Mucosa of descending colon (tissue), 3 donors: ENCODE measurements at regions of chr1 and their contacts with region 1.

Region 1: GRCh38 chr1:150925816-150926741 is at the start of gene SETDB1:
- DNase-seq: peak; percentile 96 to 97 (median 96)
- ATAC-seq: peak; percentile 99
- H3K4me3 ChIP-seq: peak within 1 kb of the TSS; percentile 48
- H3K4me1 ChIP-seq: peaks cover 10% of the 10 kb centered on the region
- CTCF ChIP-seq: no peak
- total RNA-seq, gene SETDB1: 35.4 to 49.4 (median 42.8) TPM

Region 2: GRCh38 chr1:150789396-150789795 is 136.7 kb before region 1 on chr1:
- intact Hi-C with region 1: no loop called
- DNase-seq: no peak
- ATAC-seq: no peak
- H3K4me3 ChIP-seq: no peak overlapping the region
- H3K4me1 ChIP-seq: no peaks in the 10 kb centered on the region
- CTCF ChIP-seq: no peak

Region 3: DNA sequence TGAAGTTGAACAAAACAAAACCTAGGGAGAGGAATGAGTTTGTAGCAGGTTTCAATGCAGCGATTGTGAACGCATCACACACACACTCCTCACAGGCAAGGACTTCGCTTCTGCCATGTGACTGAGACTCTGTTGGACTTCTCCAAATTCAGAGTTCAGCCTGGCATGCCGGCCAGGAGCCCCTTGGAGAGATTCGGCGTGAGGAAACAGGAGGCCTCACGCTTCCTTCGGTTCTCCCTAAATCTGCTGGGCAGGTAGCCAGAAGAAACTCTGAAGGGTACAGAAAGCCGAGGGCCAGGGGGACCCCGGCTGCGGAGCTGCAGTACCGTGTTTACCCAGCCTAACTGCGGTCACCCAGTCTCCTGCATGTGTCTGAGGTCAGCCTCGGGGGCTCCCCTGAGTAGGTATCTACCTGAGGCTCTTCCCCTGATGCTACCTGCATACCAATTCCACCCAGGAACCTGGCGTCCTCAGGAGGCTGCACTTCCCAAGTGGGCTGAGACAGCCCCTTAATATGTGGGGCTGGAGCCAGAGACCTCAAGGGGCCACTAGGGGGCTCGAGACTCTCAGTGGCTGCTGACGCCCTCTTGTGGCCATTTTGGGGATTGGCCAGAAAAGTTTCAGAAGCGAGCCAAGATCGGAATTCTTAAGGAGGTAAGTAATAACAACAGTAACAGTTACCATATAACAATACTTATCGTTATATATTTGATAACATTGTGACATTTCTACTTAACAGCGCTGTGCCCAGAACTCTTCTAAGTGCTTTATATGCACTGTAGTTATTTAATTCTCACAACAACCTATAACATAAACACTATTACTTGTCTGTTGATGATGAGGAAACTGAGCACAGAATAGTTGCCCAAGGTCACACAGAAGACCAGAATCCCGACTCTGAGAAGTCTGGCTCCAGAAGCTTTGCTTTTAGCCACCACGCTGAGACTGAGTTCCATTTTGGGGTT is 53.3 kb after region 1 on chr1:
- intact Hi-C with region 1: loop called in 1 of 2 experiments (anchors 10 kb)
- DNase-seq: peak; percentile 74 to 97 (median 80)
- ATAC-seq: peak; percentile 61
- H3K4me3 ChIP-seq: no peak overlapping the region
- H3K4me1 ChIP-seq: peaks cover 26% of the 10 kb centered on the region
- CTCF ChIP-seq: peak; percentile 98